ENCODE measurements at regions of chr17 and their contacts with region 1.

Region 1: DNA sequence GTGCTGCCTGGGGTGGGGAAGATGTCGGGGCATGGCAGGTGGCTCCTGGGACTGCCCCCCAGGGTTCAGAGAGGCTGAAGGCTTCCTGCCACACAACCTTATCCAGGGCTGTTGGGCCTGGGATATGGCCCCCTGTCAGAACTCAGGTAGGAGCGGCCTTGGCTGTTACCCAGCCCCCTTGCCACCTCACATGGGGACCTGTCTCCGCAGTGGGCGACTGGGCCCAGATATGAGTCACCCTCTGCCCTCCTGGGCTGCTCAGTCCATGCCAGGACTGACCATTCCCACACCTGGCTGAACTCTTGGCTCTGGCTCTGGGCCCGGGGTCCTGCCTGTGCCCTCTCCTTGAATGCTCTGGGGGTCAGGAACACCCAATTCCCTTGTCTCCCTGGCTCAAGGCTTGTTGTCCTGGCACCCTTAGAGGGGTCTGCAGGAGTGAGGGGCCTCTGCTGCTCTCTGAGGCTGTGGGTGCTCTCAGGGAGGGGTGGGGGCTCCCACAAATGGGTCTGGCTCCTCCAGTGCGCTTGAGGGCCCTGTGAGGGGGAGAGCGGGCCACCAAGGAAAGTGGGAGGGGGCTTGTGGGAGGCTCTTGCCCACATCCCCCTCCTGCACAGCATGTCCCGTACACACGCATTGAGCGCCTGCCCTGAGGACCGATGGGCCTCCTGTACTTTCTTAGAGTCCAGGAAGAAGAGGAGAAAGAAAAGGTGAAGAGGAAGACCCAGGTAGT is 36.0 kb downstream of the LGALS9 start:
- DNase-seq: no peak
- ATAC-seq: no peak
- H3K4me3 ChIP-seq: no peak overlapping the region
- H3K27ac ChIP-seq: no peak overlapping the region
- H3K4me1 ChIP-seq: no peaks in the 10 kb centered on the region
- H3K27me3 ChIP-seq: peaks cover 0 to 29% of the 10 kb centered on the region in 2 experiments; a peak in 3 of 5 replicates
- CTCF ChIP-seq: no peak
- EP300 ChIP-seq: no peak
- POLR2A ChIP-seq: no peak
- RAD21 ChIP-seq: no peak

Region 2: GRCh38 chr17:27339836-27340550 is 327.0 kb before region 1 on chr17:
- CTCF ChIA-PET with region 1: no interaction called
- POLR2A ChIA-PET with region 1: no interaction called
- in situ Hi-C with region 1: no loop called
- intact Hi-C with region 1: no loop called
- DNase-seq: peak; percentile 87 to 95 (median 90)
- ATAC-seq: peak; percentile 92
- H3K4me3 ChIP-seq: no peak overlapping the region
- H3K27ac ChIP-seq: peak overlapping the region; percentile 83
- H3K4me1 ChIP-seq: peaks cover 36 to 68% of the 10 kb centered on the region in 2 experiments
- H3K27me3 ChIP-seq: no peaks in the 10 kb centered on the region
- CTCF ChIP-seq: no peak
- EP300 ChIP-seq: peak; percentile 78
- POLR2A ChIP-seq: peak; percentile 57; the same call in 1 of the 2 replicates
- RAD21 ChIP-seq: no peak

Region 3: DNA sequence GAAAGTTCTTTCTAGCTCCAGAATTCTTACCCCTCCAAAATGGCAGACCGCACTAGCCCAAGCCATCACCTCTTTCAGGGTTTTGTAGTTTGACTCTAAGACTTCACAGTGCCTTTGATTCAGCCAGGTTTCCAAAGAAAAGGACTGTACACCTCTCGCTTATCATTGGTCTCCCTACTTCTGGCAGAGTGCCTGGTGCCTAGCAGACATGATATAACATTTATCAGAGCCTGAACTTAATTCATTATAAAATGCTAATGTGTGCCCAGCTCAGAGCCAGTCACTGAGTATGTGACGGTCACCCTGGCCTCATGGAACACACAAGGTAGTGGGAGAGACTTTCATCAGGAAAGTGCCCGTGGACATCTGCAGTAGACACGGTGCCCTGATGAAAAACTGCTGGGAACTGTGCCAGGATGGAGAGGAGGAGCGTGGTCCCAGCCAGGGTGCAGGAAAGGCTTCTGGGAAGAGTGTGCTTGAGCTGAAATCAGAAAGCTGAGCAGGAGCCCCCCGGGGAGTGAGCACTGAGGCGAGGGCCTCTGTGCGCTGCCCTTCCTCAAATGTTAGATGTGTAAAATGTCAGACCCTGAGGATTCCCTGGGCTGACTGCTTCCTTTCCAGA is 70.3 kb before region 1 on chr17:
- CTCF ChIA-PET with region 1: no interaction called
- POLR2A ChIA-PET with region 1: no interaction called
- in situ Hi-C with region 1: no loop called
- intact Hi-C with region 1: no loop called
- DNase-seq: no peak
- ATAC-seq: no peak
- H3K4me3 ChIP-seq: no peak overlapping the region
- H3K27ac ChIP-seq: no peak overlapping the region
- H3K4me1 ChIP-seq: peaks cover 15 to 26% of the 10 kb centered on the region in 2 experiments; a peak in 4 of 5 replicates
- H3K27me3 ChIP-seq: no peaks in the 10 kb centered on the region
- CTCF ChIP-seq: no peak
- EP300 ChIP-seq: no peak
- POLR2A ChIP-seq: no peak
- RAD21 ChIP-seq: no peak

Region 4: DNA sequence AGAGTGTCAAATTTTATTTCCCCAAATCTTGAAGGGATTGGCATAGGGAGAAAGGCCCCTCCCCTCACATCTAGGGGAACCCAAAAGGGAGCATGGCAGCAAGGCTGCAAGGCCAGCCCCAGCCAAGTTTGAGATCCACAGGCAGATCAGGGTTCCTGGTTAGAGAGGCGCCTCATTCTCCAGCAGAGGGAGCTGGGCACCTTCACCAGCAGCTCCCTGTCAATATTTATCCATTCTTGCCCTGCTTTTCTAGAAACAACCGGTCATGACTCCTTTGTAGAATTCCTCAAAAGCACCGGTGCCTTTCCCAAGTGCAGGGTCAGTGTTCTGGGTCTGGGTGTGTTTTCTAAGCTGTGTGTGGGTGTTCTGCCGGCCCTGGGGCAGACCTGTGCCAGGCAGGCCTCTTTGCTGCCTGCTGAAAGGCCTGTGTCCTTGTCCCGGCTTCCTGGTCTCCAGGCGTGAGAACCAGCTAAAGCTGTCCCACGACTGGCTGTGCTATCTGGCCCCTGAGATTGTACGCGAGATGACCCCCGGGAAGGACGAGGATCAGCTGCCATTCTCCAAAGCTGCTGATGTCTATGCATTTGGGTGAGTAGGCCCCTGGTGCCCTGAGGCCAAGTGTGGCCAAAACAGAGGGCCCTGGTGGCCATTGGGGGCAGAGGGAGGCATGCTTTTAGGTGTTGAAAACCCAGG is 57.2 kb before region 1 on chr17:
- CTCF ChIA-PET with region 1: no interaction called
- POLR2A ChIA-PET with region 1: no interaction called
- in situ Hi-C with region 1: no loop called
- intact Hi-C with region 1: no loop called
- DNase-seq: peak in 1 of 4 experiments; percentile 31
- ATAC-seq: peak; percentile 61
- H3K4me3 ChIP-seq: no peak overlapping the region
- H3K27ac ChIP-seq: no peak overlapping the region
- H3K4me1 ChIP-seq: peaks cover 5 to 15% of the 10 kb centered on the region in 2 experiments; a peak in 4 of 5 replicates
- H3K27me3 ChIP-seq: no peaks in the 10 kb centered on the region
- CTCF ChIP-seq: peak; percentile 52 to 65 (median 54)
- EP300 ChIP-seq: no peak
- POLR2A ChIP-seq: no peak
- RAD21 ChIP-seq: peak in 1 of 2 experiments; percentile 43; a peak in 2 of 4 replicates

Region 5: GRCh38 chr17:27692766-27693165 is 25.8 kb after region 1 on chr17:
- CTCF ChIA-PET with region 1: no interaction called
- POLR2A ChIA-PET with region 1: no interaction called
- in situ Hi-C with region 1: no loop called
- intact Hi-C with region 1: no loop called
- DNase-seq: no peak
- ATAC-seq: no peak
- H3K4me3 ChIP-seq: no peak overlapping the region
- H3K27ac ChIP-seq: no peak overlapping the region
- H3K4me1 ChIP-seq: no peaks in the 10 kb centered on the region
- H3K27me3 ChIP-seq: no peaks in the 10 kb centered on the region
- CTCF ChIP-seq: no peak
- EP300 ChIP-seq: no peak
- POLR2A ChIP-seq: no peak
- RAD21 ChIP-seq: no peak

Region 6: GRCh38 chr17:27747462-27748359 is 80.7 kb after region 1 on chr17:
- CTCF ChIA-PET with region 1: no interaction called
- POLR2A ChIA-PET with region 1: no interaction called
- in situ Hi-C with region 1: loop called (anchors 10 kb)
- intact Hi-C with region 1: no loop called
- DNase-seq: peak; percentile 32 to 57 (median 49)
- ATAC-seq: peak; percentile 69
- H3K4me3 ChIP-seq: no peak overlapping the region
- H3K27ac ChIP-seq: no peak overlapping the region
- H3K4me1 ChIP-seq: no peaks in the 10 kb centered on the region; a peak in 1 of 5 replicates
- H3K27me3 ChIP-seq: no peaks in the 10 kb centered on the region; a peak in 1 of 5 replicates
- CTCF ChIP-seq: peak; percentile 56 to 64 (median 58)
- EP300 ChIP-seq: no peak
- POLR2A ChIP-seq: no peak
- RAD21 ChIP-seq: no peak

Measured in K562 (cell line).